ENCODE measurements at regions of chr19 and their contacts with region 1.

Region 1: GRCh38 chr19:58128041-58128685 is 22.4 kb downstream of the ZNF329 start:
- DNase-seq: no peak
- H3K4me3 ChIP-seq: no peak overlapping the region
- H3K27ac ChIP-seq: no peak overlapping the region
- H3K4me1 ChIP-seq: no peaks in the 10 kb centered on the region
- H3K27me3 ChIP-seq: no peaks in the 10 kb centered on the region
- CTCF ChIP-seq: no peak

Region 2: DNA sequence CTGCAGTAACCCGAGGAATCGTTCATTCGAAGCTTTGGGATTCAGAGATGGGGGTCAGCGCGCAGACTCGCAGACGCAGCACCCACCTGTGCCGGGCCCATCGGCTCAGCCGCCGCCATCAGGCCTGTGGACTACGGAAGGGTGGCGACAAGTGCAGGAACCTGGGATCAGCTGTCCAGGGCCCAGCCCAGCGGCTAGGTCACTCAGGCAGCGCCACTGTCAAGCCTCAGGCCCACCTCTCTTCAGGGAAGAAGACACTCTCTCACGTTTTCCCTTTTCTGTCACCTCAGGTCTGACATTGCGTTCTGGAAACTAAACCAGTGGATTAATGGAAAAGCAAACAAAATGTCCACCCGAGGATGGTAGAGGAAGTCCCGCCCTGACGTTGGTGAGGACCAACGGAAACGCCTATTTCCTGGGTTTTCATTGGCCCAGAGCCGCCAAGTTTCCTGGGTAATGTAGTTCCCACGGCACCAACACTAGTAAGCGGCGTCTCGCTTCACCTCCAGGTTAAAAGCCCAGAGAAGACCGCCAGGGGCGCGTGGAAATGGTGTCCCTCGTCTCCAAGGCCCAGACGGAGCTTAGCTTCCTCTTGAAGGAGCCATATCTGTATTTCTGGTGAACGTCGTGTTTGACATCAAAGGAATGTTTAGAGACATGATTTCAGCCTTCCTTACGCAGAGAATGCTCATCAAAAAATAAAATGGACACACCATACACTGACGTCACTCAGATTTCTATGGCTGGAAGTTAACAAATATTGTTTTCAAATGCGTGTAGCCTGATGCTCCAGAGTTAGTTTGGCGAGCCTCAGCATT is 650.8 kb before region 1 on chr19 and contains the start of gene ZNF772:
- CTCF ChIA-PET with region 1: no interaction called
- dilution Hi-C with region 1: loop called (anchors 5 kb)
- in situ Hi-C with region 1: no loop called
- intact Hi-C with region 1: no loop called
- DNase-seq: peak; percentile 91
- H3K4me3 ChIP-seq: peak within 1 kb of the TSS; percentile 50 to 78 (median 66)
- H3K27ac ChIP-seq: no peak within 1 kb of the TSS
- H3K4me1 ChIP-seq: peaks cover 7% of the 10 kb centered on the region
- H3K27me3 ChIP-seq: no peaks in the 10 kb centered on the region
- CTCF ChIP-seq: peak; percentile 45 to 47
- total RNA-seq, gene ZNF772: 11.7 to 15.0 TPM

Region 3: GRCh38 chr19:58166708-58167280 is 38.6 kb after region 1 on chr19:
- CTCF ChIA-PET with region 1: no interaction called
- dilution Hi-C with region 1: loop called (anchors 5 kb)
- in situ Hi-C with region 1: no loop called
- intact Hi-C with region 1: no loop called
- DNase-seq: no peak
- H3K4me3 ChIP-seq: no peak overlapping the region
- H3K27ac ChIP-seq: no peak overlapping the region
- H3K4me1 ChIP-seq: no peaks in the 10 kb centered on the region
- H3K27me3 ChIP-seq: no peaks in the 10 kb centered on the region
- CTCF ChIP-seq: no peak

Region 4: DNA sequence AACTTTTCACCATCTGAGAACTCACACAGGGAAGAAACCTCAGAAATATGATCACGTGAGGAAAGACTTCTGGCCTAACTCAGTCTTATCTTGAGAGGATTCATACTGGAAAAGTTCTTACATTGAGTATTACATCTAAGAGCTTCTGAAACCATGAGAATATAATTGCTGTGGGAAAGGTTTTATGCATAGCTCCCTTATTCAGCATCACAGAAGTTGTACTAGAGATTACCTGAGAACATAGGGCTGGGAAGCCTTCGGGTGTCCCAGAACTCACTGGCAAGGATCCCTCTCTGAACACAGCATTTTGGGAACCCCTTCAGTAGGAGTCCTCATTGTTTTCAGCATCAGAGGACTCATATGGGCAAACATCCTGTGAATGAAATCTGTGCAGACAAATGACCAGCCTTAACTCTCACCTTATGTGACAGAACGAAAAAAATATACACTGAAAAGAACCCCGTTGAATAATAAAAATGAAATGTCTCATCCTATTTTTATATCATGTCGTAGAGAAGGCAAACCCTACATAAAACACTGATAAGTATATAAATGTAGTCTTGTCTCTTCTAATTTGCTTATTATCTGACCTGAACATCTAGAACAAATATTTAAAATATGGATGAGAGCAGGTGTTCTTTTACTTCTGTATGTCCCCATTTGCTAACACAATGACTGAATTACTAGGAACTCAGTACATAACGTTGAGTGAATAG is 68.9 kb after region 1 on chr19:
- CTCF ChIA-PET with region 1: no interaction called
- dilution Hi-C with region 1: loop called (anchors 5 kb)
- in situ Hi-C with region 1: no loop called
- intact Hi-C with region 1: no loop called
- DNase-seq: peak; percentile 31
- H3K4me3 ChIP-seq: no peak overlapping the region
- H3K27ac ChIP-seq: no peak overlapping the region
- H3K4me1 ChIP-seq: no peaks in the 10 kb centered on the region
- H3K27me3 ChIP-seq: no peaks in the 10 kb centered on the region
- CTCF ChIP-seq: no peak